PC-9 (cell line): ENCODE measurements at regions of chr16 and their contacts with region 1.

Region 1: GRCh38 chr16:4944333-4945281 is 7.7 kb upstream of the PPL start:
- DNase-seq: peak; percentile 97 to 100
- H3K4me3 ChIP-seq: 0 out of 2 replicates have a peak overlapping the region, but pooled peaks have one; percentile 23
- H3K27ac ChIP-seq: peak overlapping the region; percentile 96
- H3K4me1 ChIP-seq: peaks cover 78% of the 10 kb centered on the region
- H3K27me3 ChIP-seq: no peaks in the 10 kb centered on the region
- CTCF ChIP-seq: no peak

Region 2: DNA sequence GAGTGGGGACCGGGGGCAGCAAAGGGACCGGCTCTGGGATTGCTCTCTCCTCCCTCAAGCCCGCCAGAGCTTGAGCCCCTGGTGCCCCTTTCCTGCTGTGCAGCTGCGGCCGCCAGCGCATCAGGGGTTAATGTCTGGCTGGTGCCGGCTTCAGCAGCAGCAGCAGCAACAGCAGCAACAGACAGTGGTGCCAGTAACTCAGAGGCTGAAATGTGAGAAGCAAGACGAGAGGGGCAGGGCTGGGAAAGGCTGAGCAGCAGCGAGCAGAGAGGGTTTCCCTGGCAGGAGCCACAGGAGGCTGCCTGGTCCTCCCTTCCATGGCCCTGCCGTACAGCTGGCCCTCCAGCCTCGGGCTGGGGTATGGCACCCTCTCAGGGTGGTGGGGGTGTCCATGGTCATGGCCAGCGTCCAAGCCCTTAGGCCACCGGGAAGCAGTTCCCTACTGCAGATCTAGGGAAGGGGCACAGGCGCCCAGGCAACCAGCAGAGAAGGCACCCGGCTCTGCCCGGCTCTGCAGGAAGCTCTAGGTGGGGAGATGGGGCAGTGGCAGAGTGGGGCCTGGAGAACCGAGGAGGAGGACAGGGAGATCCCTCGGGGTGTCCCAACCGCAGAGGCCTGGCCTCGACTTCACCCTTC is 650.7 kb before region 1 on chr16:
- CTCF ChIA-PET with region 1: no interaction called
- POLR2A ChIA-PET with region 1: no interaction called
- intact Hi-C with region 1: loop called (anchors 10 kb)
- DNase-seq: peak; percentile 60 to 83
- H3K4me3 ChIP-seq: no peak overlapping the region
- H3K27ac ChIP-seq: 0 out of 2 replicates have a peak overlapping the region, but pooled peaks have one; percentile 2
- H3K4me1 ChIP-seq: peaks cover 55% of the 10 kb centered on the region
- H3K27me3 ChIP-seq: no peaks in the 10 kb centered on the region
- CTCF ChIP-seq: no peak

Region 3: GRCh38 chr16:4836727-4837126 is 107.9 kb before region 1 on chr16:
- CTCF ChIA-PET with region 1: no interaction called
- POLR2A ChIA-PET with region 1: no interaction called
- intact Hi-C with region 1: no loop called
- DNase-seq: no peak
- H3K4me3 ChIP-seq: no peak overlapping the region
- H3K27ac ChIP-seq: no peak overlapping the region
- H3K4me1 ChIP-seq: no peaks in the 10 kb centered on the region
- H3K27me3 ChIP-seq: no peaks in the 10 kb centered on the region
- CTCF ChIP-seq: no peak

Region 4: GRCh38 chr16:4846891-4847773 is 97.5 kb before region 1 on chr16 and contains the starts of genes GLYR1 and UBN1:
- CTCF ChIA-PET with region 1: no interaction called
- POLR2A ChIA-PET with region 1: no interaction called
- intact Hi-C with region 1: loop called (anchors 1 kb)
- DNase-seq: peak; percentile 89 to 100
- H3K4me3 ChIP-seq: peak within 1 kb of the TSS; percentile 94
- H3K27ac ChIP-seq: 0 out of 2 replicates have a peak within 1 kb of the TSS, but pooled peaks have one; percentile 16
- H3K4me1 ChIP-seq: peaks cover 47% of the 10 kb centered on the region
- H3K27me3 ChIP-seq: no peaks in the 10 kb centered on the region
- CTCF ChIP-seq: no peak
- total RNA-seq, gene GLYR1: 97.5 and 135 TPM in 2 replicates
- total RNA-seq, gene UBN1: 42.7 and 44.1 TPM in 2 replicates

Region 5: GRCh38 chr16:4882633-4883285 is 61.8 kb before region 1 on chr16:
- CTCF ChIA-PET with region 1: no interaction called
- POLR2A ChIA-PET with region 1: no interaction called
- intact Hi-C with region 1: loop called (anchors 1 kb)
- DNase-seq: peak; percentile 93
- H3K4me3 ChIP-seq: no peak overlapping the region
- H3K27ac ChIP-seq: peak overlapping the region; percentile 53
- H3K4me1 ChIP-seq: peaks cover 27% of the 10 kb centered on the region
- H3K27me3 ChIP-seq: no peaks in the 10 kb centered on the region
- CTCF ChIP-seq: no peak

Region 6: DNA sequence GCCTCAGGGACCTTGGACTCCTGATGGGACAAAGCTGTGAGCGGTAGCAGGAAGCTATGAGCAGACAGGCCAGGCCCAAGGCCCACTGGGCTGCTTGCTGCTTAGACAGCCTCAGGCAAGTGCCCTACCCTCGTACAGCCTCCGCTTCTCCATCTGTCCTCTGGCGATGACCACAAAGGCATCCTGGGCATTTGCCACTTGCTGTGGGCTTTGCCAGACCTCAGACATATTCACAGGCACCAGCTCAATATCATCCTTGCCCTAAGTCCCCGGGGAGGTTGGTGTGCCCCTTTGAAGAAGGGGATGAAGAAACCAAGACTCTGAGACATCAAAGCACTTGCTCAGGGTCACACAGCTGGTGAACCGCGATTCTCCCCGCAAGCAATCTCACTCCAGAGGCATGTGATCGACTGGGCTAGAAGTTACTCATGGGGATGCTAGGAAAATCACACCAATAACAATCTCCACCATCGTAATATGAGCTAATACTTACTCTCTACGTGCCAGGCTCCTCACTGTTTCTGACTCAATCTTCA is 29.3 kb before region 1 on chr16:
- CTCF ChIA-PET with region 1: interaction called, 8 read pairs
- POLR2A ChIA-PET with region 1: interaction called, 9 read pairs
- intact Hi-C with region 1: loop called (anchors 1 kb)
- DNase-seq: peak; percentile 76 to 95
- H3K4me3 ChIP-seq: no peak overlapping the region
- H3K27ac ChIP-seq: peak overlapping the region; percentile 89
- H3K4me1 ChIP-seq: peaks cover 76% of the 10 kb centered on the region
- H3K27me3 ChIP-seq: no peaks in the 10 kb centered on the region
- CTCF ChIP-seq: no peak

Region 7: GRCh38 chr16:4924593-4925378 is 19.8 kb before region 1 on chr16:
- CTCF ChIA-PET with region 1: no interaction called
- POLR2A ChIA-PET with region 1: no interaction called
- intact Hi-C with region 1: loop called (anchors 1 kb)
- DNase-seq: peak; percentile 96 to 99
- H3K4me3 ChIP-seq: peak overlapping the region; percentile 15; the same call in 1 of the 2 replicates
- H3K27ac ChIP-seq: peak overlapping the region; percentile 65
- H3K4me1 ChIP-seq: peaks cover 45% of the 10 kb centered on the region
- H3K27me3 ChIP-seq: no peaks in the 10 kb centered on the region
- CTCF ChIP-seq: no peak